ENCODE measurements at regions of chr5 and their contacts with region 1.

Region 1: DNA sequence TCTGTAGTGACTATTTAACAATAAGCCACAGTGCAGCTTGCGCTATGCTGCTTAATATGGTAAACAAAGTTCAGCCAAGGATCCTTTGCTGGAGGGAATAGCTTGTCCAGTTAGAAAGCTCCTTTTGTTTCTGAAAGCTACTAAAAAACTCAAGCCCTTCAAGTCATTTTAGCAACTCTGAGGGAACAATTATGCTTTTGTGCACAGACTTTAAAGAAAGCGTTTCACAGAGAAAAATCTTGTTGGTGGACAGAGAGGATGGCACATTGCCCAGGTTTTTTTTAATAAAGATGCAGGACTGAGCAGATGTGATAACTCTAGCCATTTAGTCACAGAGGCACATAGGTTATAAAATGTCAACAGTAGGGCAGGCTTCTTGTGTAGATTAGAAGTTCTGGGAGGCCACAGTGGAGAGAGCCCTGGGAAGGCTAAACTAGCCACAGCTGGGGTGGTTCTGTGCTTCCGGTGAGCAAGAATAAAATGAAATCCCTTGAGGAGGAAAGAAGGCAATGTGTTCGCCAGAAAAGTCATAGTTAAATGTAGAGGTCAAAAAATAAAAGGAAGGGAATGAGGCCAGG is 63.4 kb downstream of the ALDH7A1 start:
- DNase-seq: no peak
- ATAC-seq: no peak
- H3K4me3 ChIP-seq: no peak overlapping the region
- H3K4me3 Mint-ChIP-seq: no peak overlapping the region
- H3K27ac ChIP-seq: no peak overlapping the region
- H3K27ac Mint-ChIP-seq: no peak overlapping the region
- H3K4me1 ChIP-seq: no peaks in the 10 kb centered on the region
- H3K4me1 Mint-ChIP-seq: no peaks in the 10 kb centered on the region
- H3K27me3 ChIP-seq: no peaks in the 10 kb centered on the region
- H3K27me3 Mint-ChIP-seq: no peaks in the 10 kb centered on the region
- CTCF ChIP-seq: no peak

Region 2: GRCh38 chr5:125798307-125798706 is 733.3 kb before region 1 on chr5:
- CTCF ChIA-PET with region 1: no interaction called
- POLR2A ChIA-PET with region 1: no interaction called
- intact Hi-C with region 1: no loop called
- DNase-seq: no peak
- ATAC-seq: no peak
- H3K4me3 ChIP-seq: no peak overlapping the region
- H3K4me3 Mint-ChIP-seq: no peak overlapping the region
- H3K27ac ChIP-seq: no peak overlapping the region
- H3K27ac Mint-ChIP-seq: no peak overlapping the region
- H3K4me1 ChIP-seq: no peaks in the 10 kb centered on the region
- H3K4me1 Mint-ChIP-seq: no peaks in the 10 kb centered on the region
- H3K27me3 ChIP-seq: no peaks in the 10 kb centered on the region
- H3K27me3 Mint-ChIP-seq: no peaks in the 10 kb centered on the region
- CTCF ChIP-seq: no peak

Region 3: GRCh38 chr5:126462239-126463014 is 69.2 kb before region 1 on chr5:
- CTCF ChIA-PET with region 1: no interaction called
- POLR2A ChIA-PET with region 1: no interaction called
- intact Hi-C with region 1: loop called in 1 of 2 experiments (anchors 5 kb)
- DNase-seq: no peak
- ATAC-seq: no peak
- H3K4me3 ChIP-seq: no peak overlapping the region
- H3K4me3 Mint-ChIP-seq: no peak overlapping the region
- H3K27ac ChIP-seq: no peak overlapping the region
- H3K27ac Mint-ChIP-seq: peak overlapping the region; percentile 35
- H3K4me1 ChIP-seq: no peaks in the 10 kb centered on the region
- H3K4me1 Mint-ChIP-seq: peaks cover 28% of the 10 kb centered on the region
- H3K27me3 ChIP-seq: no peaks in the 10 kb centered on the region
- H3K27me3 Mint-ChIP-seq: no peaks in the 10 kb centered on the region
- CTCF ChIP-seq: no peak

Measured in CD4-positive, alpha-beta T cell (primary cell).